K562 (cell line): ENCODE measurements at regions of chr12 and their contacts with region 1.

Region 1: DNA sequence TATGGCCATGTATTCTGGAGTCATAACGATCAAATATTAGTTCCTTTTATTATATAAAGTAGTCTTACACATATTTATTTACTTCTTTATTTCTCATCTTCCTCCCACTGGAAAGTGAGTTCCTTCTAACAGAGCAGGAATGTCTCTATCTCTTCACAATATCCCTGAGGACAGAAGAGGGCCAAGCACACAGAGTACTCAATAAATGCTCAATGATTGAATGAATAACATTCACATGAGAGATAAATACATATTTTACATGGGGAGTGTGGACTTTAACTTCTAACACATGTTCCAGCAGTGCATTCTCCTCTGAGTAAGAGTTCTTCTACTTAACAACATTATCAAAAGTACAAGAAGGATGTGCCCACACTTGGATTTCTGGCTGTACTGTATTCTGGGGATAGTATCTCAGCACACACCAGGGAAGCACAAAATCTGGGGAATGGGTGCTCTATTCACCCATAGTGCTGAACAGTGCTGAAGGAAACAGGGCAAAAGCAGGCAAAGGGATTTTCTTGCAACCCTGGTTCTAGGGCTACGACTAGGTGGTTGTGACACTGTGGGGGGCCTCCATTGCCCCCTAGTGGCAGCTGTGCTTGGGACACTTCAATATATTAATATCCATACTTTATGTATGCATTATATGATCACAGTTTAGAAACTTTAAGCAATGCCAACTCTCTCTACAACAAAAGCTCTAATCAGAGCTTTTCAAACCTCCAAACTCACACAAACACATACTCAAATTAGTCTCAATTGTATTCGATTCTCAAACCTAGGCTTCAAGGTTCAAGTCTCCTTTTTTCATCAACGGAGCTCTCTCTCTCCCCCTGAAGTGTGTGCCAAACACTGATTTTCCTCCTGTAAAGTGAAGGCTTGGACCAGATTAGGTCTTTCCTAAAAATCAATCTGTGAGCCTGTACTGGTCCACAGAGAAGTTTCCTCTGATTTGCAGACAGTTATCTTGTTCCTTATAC is 115.5 kb downstream of the SLC2A13 start:
- DNase-seq: peak; percentile 49 to 69 (median 53)
- ATAC-seq: peak; percentile 96
- H3K4me3 ChIP-seq: no peak overlapping the region
- H3K27ac ChIP-seq: no peak overlapping the region
- H3K4me1 ChIP-seq: no peaks in the 10 kb centered on the region
- H3K27me3 ChIP-seq: no peaks in the 10 kb centered on the region
- CTCF ChIP-seq: peak; percentile 77 to 86 (median 84)
- EP300 ChIP-seq: no peak
- POLR2A ChIP-seq: no peak
- RAD21 ChIP-seq: peak; percentile 49 to 72

Region 2: GRCh38 chr12:39587225-39587624 is 403.2 kb before region 1 on chr12:
- CTCF ChIA-PET with region 1: no interaction called
- POLR2A ChIA-PET with region 1: no interaction called
- in situ Hi-C with region 1: no loop called
- intact Hi-C with region 1: loop called (anchors 2 kb)
- DNase-seq: peak in 1 of 4 experiments; percentile 18
- ATAC-seq: peak; percentile 85
- H3K4me3 ChIP-seq: no peak overlapping the region
- H3K27ac ChIP-seq: no peak overlapping the region
- H3K4me1 ChIP-seq: no peaks in the 10 kb centered on the region
- H3K27me3 ChIP-seq: no peaks in the 10 kb centered on the region
- CTCF ChIP-seq: peak; percentile 14 to 47 (median 24); a peak in 2 of 6 replicates
- EP300 ChIP-seq: no peak
- POLR2A ChIP-seq: no peak
- RAD21 ChIP-seq: peak; percentile 19 to 60; a peak in 2 of 4 replicates